ENCODE measurements at regions of chr6 and their contacts with region 1.

Region 1: DNA sequence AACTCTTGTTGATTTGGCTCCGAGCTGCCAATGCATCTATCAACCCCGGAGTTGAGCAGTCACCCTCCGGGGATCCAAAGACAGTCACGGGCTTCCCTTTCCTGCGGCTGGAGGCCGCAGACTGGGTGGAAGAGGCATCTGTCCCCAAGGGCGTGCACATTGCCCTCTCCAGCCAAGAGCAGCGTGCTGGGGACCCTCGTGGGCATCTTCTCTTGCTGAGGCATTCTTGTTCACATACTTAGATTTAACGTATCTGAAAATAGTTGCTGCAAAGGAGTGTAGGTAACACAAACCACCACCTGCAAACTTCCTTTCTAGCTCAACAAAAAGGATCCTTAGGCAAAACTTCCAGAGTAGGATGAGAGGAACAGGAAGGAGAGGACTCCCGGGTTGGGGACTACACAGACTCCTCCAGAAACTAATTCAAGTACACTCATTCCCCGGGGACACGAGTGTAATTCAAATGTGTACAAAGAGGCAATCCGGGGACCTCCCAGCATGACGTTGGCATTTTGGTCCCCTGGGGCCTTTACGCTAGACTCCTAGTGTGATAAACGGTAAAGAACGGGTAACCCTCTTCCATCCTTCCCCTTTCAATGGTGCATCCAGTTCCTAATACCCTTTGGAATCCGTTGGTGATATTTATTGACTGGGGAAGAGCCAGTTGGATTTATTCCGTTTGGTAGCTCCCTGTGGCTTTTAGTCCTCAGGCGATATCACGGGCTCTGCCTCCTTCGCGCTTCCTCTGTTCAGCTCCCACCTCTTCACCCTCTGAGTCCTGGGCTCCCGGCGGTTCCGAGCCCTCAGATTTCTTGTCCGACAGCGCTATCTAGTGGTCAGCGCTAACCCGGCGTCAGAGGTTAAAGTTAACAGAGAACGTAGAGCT is 2.7 kb upstream of the COL12A1 start:
- DNase-seq: peak; percentile 66
- ATAC-seq: peak; percentile 60
- H3K4me3 ChIP-seq: no peak overlapping the region
- H3K27ac ChIP-seq: no peak overlapping the region
- H3K4me1 ChIP-seq: peaks cover 8 to 23% of the 10 kb centered on the region in 2 experiments
- H3K27me3 ChIP-seq: no peaks in the 10 kb centered on the region
- CTCF ChIP-seq: peak; percentile 80 to 97 (median 87); a peak in 5 of 6 replicates
- POLR2A ChIP-seq: no peak
- RAD21 ChIP-seq: peak; percentile 95

Region 2: DNA sequence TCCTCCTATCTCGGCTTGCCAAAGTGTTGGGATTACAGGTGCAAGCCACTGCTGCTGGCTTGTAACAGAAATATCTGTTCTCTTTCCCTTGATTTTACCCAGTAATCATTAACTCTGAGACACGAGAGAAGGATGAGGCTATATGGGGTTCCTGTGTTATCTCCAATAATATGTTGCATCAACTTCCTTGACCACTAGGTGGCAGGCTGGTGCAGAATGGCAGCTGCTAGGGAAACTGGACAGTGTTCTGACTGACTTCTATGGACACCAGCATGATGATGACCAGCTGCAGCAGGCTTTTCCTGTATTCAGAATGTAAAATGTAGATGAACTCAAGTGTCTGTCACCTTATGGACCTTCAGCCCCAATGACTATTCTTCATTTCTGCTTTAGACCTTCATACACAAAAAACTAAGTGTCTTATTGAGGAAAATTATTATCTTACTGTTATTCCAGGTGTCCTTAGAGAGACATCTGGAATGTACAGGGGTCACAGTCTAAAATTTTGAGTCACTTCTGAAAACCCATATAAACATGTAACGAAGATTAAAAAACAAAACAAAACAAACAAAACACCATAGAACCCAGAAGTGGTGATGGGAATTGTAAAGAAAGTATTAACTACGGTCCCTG is 1533.0 kb before region 1 on chr6:
- CTCF ChIA-PET with region 1: interaction called, 3 read pairs
- POLR2A ChIA-PET with region 1: no interaction called
- RAD21 ChIA-PET with region 1: no interaction called
- intact Hi-C with region 1: loop called (anchors 5 kb)
- DNase-seq: peak; percentile 67
- ATAC-seq: peak; percentile 95
- H3K4me3 ChIP-seq: no peak overlapping the region
- H3K27ac ChIP-seq: no peak overlapping the region
- H3K4me1 ChIP-seq: peaks cover 16 to 28% of the 10 kb centered on the region in 2 experiments
- H3K27me3 ChIP-seq: no peaks in the 10 kb centered on the region
- CTCF ChIP-seq: peak; percentile 85 to 91 (median 88)
- POLR2A ChIP-seq: no peak
- RAD21 ChIP-seq: peak; percentile 91

Region 3: DNA sequence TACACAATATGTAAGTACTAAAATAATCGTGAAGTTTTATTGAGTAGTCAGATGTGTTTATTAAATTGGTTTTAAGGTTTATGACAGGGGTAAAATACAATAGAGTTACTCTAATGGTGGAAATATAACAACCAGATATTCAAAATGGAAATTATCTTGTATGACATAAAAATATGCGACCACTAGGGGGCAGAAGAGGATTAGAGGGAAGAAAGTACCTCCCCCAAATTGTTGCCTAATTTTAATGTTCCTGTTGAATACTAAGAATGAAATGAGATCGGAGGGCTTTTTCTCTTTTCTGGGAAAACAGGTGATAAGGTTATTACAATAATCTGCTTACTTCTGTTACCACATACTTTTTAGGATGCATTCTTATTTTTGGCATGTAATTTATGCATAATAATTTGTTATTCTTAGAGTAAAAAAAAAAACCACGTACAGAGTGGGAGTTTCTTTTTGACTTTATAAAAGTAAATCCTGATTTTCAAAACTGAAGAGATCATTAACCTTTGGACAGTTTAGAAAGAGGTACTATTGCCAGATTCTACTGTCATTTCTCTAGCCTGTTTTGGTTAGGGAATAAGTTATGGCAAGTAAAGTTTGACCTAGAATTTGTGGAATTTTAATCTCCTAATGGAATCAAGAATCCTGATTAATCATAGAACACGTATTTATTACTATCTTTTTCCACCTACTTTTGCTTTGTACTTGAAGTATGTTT is 1353.4 kb before region 1 on chr6:
- CTCF ChIA-PET with region 1: interaction called, 6 read pairs
- POLR2A ChIA-PET with region 1: no interaction called
- RAD21 ChIA-PET with region 1: no interaction called
- intact Hi-C with region 1: loop called (anchors 1 kb)
- DNase-seq: peak; percentile 41
- ATAC-seq: peak; percentile 44; the same call in 1 of the 2 replicates
- H3K4me3 ChIP-seq: no peak overlapping the region
- H3K27ac ChIP-seq: no peak overlapping the region
- H3K4me1 ChIP-seq: no peaks in the 10 kb centered on the region
- H3K27me3 ChIP-seq: no peaks in the 10 kb centered on the region
- CTCF ChIP-seq: peak; percentile 51 to 84 (median 57); a peak in 5 of 6 replicates
- POLR2A ChIP-seq: no peak
- RAD21 ChIP-seq: peak; percentile 73

Region 4: DNA sequence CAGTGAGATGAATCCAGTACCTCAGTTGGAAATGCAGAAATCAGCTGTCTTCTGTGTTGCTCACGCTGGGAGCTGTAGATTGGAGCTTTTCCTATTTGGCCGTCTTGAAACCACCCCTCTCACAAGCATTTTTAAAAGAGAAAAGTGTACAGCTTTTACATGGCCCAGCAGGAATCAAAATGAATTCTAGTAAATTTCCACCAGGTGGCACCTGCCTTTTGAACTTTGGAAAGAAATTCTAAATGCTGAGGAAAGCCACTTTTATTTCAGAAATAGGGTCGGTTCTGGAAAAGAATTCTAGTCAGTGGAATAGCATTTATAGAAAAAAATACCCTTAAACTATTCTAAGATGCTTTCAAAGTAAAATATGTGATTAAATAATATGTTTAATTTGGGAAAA is 864.7 kb before region 1 on chr6:
- CTCF ChIA-PET with region 1: interaction called, 13 read pairs
- POLR2A ChIA-PET with region 1: no interaction called
- RAD21 ChIA-PET with region 1: no interaction called
- intact Hi-C with region 1: loop called (anchors 5 kb)
- DNase-seq: peak; percentile 4
- ATAC-seq: peak; percentile 58
- H3K4me3 ChIP-seq: no peak overlapping the region
- H3K27ac ChIP-seq: no peak overlapping the region
- H3K4me1 ChIP-seq: no peaks in the 10 kb centered on the region
- H3K27me3 ChIP-seq: no peaks in the 10 kb centered on the region
- CTCF ChIP-seq: peak; percentile 20 to 46 (median 33); a peak in 4 of 6 replicates
- POLR2A ChIP-seq: no peak
- RAD21 ChIP-seq: peak; percentile 51

Region 5: GRCh38 chr6:74752303-74752702 is 456.2 kb before region 1 on chr6:
- CTCF ChIA-PET with region 1: interaction called, 4 read pairs
- POLR2A ChIA-PET with region 1: no interaction called
- RAD21 ChIA-PET with region 1: no interaction called
- intact Hi-C with region 1: loop called (anchors 2 kb)
- DNase-seq: no peak
- ATAC-seq: peak; percentile 54
- H3K4me3 ChIP-seq: no peak overlapping the region
- H3K27ac ChIP-seq: no peak overlapping the region
- H3K4me1 ChIP-seq: peaks cover 0 to 4% of the 10 kb centered on the region in 2 experiments; a peak in 1 of 4 replicates
- H3K27me3 ChIP-seq: no peaks in the 10 kb centered on the region
- CTCF ChIP-seq: peak; percentile 17 to 30 (median 29); a peak in 4 of 6 replicates
- POLR2A ChIP-seq: no peak
- RAD21 ChIP-seq: peak; percentile 51

Region 6: GRCh38 chr6:75526502-75527127 is 318.1 kb after region 1 on chr6:
- CTCF ChIA-PET with region 1: interaction called, 3 read pairs
- POLR2A ChIA-PET with region 1: no interaction called
- RAD21 ChIA-PET with region 1: interaction called in 1 of 2 experiments, 4 read pairs
- intact Hi-C with region 1: loop called (anchors 1 kb)
- DNase-seq: peak; percentile 67
- ATAC-seq: peak; percentile 92
- H3K4me3 ChIP-seq: no peak overlapping the region
- H3K27ac ChIP-seq: no peak overlapping the region
- H3K4me1 ChIP-seq: peaks cover 0 to 7% of the 10 kb centered on the region in 2 experiments; a peak in 1 of 4 replicates
- H3K27me3 ChIP-seq: no peaks in the 10 kb centered on the region
- CTCF ChIP-seq: peak; percentile 51 to 79 (median 78)
- POLR2A ChIP-seq: no peak
- RAD21 ChIP-seq: peak; percentile 91

Region 7: DNA sequence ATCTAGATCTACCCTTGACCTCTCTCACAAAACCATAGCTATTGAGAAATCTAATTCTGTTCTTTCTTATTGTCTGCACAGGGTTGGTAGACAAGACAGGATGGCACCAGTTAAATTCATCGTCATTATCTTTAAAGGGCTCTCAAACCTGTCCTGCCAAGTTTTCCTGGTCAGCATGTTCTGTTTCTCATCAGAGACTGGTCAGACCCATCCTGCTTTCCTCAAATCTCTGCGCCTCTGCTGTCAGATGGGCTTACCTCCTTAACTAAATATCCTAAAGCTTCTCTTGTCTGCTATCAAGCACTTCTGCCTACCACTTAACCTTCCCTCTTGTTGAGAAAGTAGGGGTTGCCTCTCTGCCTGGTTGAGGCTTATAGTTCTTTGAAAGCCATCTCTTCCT is 665.7 kb after region 1 on chr6:
- CTCF ChIA-PET with region 1: no interaction called
- POLR2A ChIA-PET with region 1: no interaction called
- RAD21 ChIA-PET with region 1: no interaction called
- intact Hi-C with region 1: no loop called
- DNase-seq: no peak
- ATAC-seq: no peak
- H3K4me3 ChIP-seq: no peak overlapping the region
- H3K27ac ChIP-seq: no peak overlapping the region
- H3K4me1 ChIP-seq: no peaks in the 10 kb centered on the region
- H3K27me3 ChIP-seq: no peaks in the 10 kb centered on the region
- CTCF ChIP-seq: no peak
- POLR2A ChIP-seq: no peak
- RAD21 ChIP-seq: no peak

Measured in HCT116 (cell line).